Activated naive CD4-positive, alpha-beta T cell treated with anti-CD3 and anti-CD28 coated beads for 36 hours (primary cell): ENCODE measurements at regions of chr1 and their contacts with region 1.

Region 1: DNA sequence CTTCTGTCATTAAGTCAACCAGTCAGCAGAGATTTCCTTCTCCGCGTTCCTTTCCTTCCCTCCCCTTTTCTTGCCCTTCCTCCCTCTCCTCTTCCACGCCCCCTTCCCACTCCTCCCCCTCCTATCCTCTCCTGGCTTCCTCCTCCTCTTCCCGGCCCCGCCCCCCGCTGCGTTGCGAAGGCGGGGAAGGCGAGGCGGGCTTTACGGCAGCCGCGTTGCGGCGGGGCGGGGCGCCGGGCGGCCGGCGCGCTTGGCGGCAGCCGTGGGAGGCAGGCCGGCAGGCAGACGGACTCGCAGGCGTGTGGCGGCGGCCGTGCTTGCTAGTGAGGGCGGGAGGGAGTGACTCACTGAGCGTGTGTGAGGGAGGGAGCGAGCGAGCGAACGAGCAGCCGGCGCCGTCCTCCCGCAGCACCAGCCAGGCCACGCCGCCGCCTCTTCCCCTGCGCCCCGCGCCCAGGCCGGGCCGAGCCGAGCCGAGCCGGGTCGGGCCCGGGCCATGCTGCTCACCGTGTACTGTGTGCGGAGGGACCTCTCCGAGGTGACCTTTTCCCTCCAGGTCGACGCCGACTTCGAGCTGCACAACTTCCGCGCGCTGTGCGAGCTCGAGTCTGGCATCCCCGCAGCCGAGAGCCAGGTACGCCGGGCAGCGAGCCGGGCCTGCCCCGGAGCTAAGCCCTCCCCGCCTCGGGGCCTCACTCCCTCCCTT is at the start of gene DDI2:
- DNase-seq: peak; percentile 96
- H3K4me3 Mint-ChIP-seq: peak within 1 kb of the TSS; percentile 90
- H3K27ac Mint-ChIP-seq: peak within 1 kb of the TSS; percentile 93
- H3K4me1 Mint-ChIP-seq: peaks cover 42% of the 10 kb centered on the region
- H3K27me3 Mint-ChIP-seq: no peaks in the 10 kb centered on the region
- total RNA-seq, gene DDI2: 19.6 to 20.7 TPM

Region 2: GRCh38 chr1:15038232-15039016 is 578.9 kb before region 1 on chr1:
- CTCF ChIA-PET with region 1: no interaction called
- intact Hi-C with region 1: no loop called
- DNase-seq: peak; percentile 52
- H3K4me3 Mint-ChIP-seq: no peak overlapping the region
- H3K27ac Mint-ChIP-seq: no peak overlapping the region
- H3K4me1 Mint-ChIP-seq: peaks cover 8% of the 10 kb centered on the region
- H3K27me3 Mint-ChIP-seq: no peaks in the 10 kb centered on the region

Region 3: GRCh38 chr1:15409388-15410222 is 207.7 kb before region 1 on chr1 and contains the start of gene EFHD2:
- CTCF ChIA-PET with region 1: no interaction called
- intact Hi-C with region 1: loop called (anchors 10 kb)
- DNase-seq: peak; percentile 79
- H3K4me3 Mint-ChIP-seq: peak within 1 kb of the TSS; percentile 90
- H3K27ac Mint-ChIP-seq: peak within 1 kb of the TSS; percentile 81
- H3K4me1 Mint-ChIP-seq: peaks cover 24% of the 10 kb centered on the region
- H3K27me3 Mint-ChIP-seq: peaks cover 2% of the 10 kb centered on the region
- total RNA-seq, gene EFHD2: 35.0 to 36.0 TPM

Region 4: GRCh38 chr1:15603050-15603965 is 14.0 kb before region 1 on chr1:
- CTCF ChIA-PET with region 1: no interaction called
- intact Hi-C with region 1: loop called (anchors 1 kb)
- DNase-seq: peak; percentile 95
- H3K4me3 Mint-ChIP-seq: peak overlapping the region; percentile 73
- H3K27ac Mint-ChIP-seq: no peak overlapping the region
- H3K4me1 Mint-ChIP-seq: peaks cover 9% of the 10 kb centered on the region
- H3K27me3 Mint-ChIP-seq: no peaks in the 10 kb centered on the region

Region 5: GRCh38 chr1:15696956-15697521 is 79.7 kb after region 1 on chr1:
- CTCF ChIA-PET with region 1: interaction called, 3 read pairs
- intact Hi-C with region 1: loop called (anchors 1 kb)
- DNase-seq: peak; percentile 79
- H3K4me3 Mint-ChIP-seq: peak overlapping the region; percentile 77
- H3K27ac Mint-ChIP-seq: peak overlapping the region; percentile 95
- H3K4me1 Mint-ChIP-seq: peaks cover 40% of the 10 kb centered on the region
- H3K27me3 Mint-ChIP-seq: no peaks in the 10 kb centered on the region

Region 6: GRCh38 chr1:15760520-15761211 is 143.3 kb after region 1 on chr1:
- CTCF ChIA-PET with region 1: no interaction called
- intact Hi-C with region 1: no loop called
- DNase-seq: no peak
- H3K4me3 Mint-ChIP-seq: no peak overlapping the region
- H3K27ac Mint-ChIP-seq: no peak overlapping the region
- H3K4me1 Mint-ChIP-seq: peaks cover 16% of the 10 kb centered on the region
- H3K27me3 Mint-ChIP-seq: peaks cover 31% of the 10 kb centered on the region